Activated CD4-positive, alpha-beta memory T cell treated with anti-CD3 and anti-CD28 coated beads, Interleukin-2, amount 10 ng/mL, durations not matched to agents 7 days and 5 days (primary cell): ENCODE measurements at regions of chr2 and their contacts with region 1.

Region 1: DNA sequence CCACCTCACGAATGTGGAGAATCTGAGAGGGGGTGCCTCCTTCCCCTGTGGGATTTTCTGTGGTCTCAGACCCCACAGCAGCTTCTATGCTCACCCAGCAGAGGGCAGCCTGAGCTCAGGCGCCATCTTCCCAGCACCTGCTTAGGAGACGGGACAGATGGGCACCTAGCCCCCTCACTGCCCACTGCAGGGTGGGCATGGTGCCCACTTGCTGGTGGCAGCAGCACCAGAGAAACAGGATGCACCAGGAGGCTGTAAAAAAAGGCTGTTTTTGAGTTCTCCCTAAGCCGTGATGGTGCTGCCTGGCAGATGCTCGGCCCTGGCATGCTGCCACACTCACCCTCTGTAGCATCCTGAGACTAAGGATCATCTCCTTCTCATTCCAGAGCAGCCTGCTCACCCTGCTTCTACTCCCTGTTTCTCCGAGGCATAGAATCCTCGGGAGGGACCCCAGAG is 19.1 kb upstream of the SLC20A1 start:
- DNase-seq: peak; percentile 75
- H3K4me3 Mint-ChIP-seq: peak overlapping the region; percentile 49
- H3K27ac Mint-ChIP-seq: peak overlapping the region; percentile 93
- H3K4me1 Mint-ChIP-seq: peaks cover 86% of the 10 kb centered on the region
- H3K27me3 Mint-ChIP-seq: no peaks in the 10 kb centered on the region

Region 2: GRCh38 chr2:112584134-112584890 is 42.3 kb before region 1 on chr2 and contains the start of gene CHCHD5:
- CTCF ChIA-PET with region 1: interaction called, 7 read pairs
- POLR2A ChIA-PET with region 1: interaction called, 21 read pairs
- DNase-seq: peak; percentile 97
- H3K4me3 Mint-ChIP-seq: peak within 1 kb of the TSS; percentile 97
- H3K27ac Mint-ChIP-seq: peak within 1 kb of the TSS; percentile 95
- H3K4me1 Mint-ChIP-seq: peaks cover 47% of the 10 kb centered on the region
- H3K27me3 Mint-ChIP-seq: no peaks in the 10 kb centered on the region
- total RNA-seq, gene CHCHD5: 40.0 to 47.5 TPM

Region 3: DNA sequence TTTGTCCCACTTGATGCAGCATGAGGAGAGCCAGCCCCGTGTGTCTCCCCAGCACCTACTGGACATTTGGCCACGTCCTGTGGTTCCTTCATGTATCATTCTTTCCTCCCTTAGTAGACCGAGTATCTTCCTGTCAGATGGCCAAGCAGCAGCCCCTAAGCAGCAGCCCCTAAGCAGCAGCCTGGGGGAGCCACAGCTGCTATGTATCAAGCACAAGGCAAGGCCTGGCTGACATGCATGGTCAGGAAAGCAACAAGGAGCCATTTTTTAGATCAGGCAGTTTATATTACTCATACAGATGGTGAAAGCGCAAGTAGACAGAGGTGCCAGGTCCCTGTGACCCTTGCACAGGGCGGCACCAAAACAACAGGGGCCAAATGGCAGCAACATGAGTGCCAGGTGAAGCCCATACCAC is 20.1 kb before region 1 on chr2:
- CTCF ChIA-PET with region 1: interaction called, 65 read pairs
- POLR2A ChIA-PET with region 1: interaction called, 5 read pairs
- DNase-seq: no peak
- H3K4me3 Mint-ChIP-seq: no peak overlapping the region
- H3K27ac Mint-ChIP-seq: no peak overlapping the region
- H3K4me1 Mint-ChIP-seq: peaks cover 7% of the 10 kb centered on the region
- H3K27me3 Mint-ChIP-seq: peaks cover 17% of the 10 kb centered on the region

Region 4: GRCh38 chr2:112658820-112659667 is 32.4 kb after region 1 on chr2:
- CTCF ChIA-PET with region 1: interaction called, 15 read pairs
- POLR2A ChIA-PET with region 1: interaction called, 22 read pairs
- DNase-seq: no peak
- H3K4me3 Mint-ChIP-seq: no peak overlapping the region
- H3K27ac Mint-ChIP-seq: peak overlapping the region; percentile 71
- H3K4me1 Mint-ChIP-seq: peaks cover 77% of the 10 kb centered on the region
- H3K27me3 Mint-ChIP-seq: no peaks in the 10 kb centered on the region

Region 5: DNA sequence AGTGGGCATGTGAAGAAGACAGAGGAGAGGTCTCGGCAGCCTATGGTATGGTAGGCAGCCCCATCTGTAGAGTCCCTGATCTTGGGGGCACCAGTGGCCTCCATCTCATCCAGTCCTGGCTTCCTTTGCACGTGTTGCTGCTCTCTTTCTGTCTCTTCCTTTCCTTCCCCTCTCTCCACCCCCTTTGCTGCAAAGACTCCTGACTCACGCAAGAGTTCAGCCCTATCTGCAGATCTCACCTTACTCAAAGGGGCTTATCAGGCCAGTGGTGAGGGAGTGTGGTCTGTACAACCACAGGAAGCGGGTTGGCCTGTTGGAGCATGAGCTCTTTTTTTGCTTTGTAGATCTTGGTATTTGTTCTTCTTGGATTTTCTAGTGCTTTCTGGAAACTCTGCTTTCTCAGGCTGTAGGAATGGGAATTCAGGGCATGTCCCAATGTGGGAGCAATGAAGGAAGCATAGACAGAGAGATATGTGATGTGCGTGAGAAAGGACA is 79.6 kb after region 1 on chr2:
- CTCF ChIA-PET with region 1: interaction called, 35 read pairs
- POLR2A ChIA-PET with region 1: interaction called, 22 read pairs
- DNase-seq: peak; percentile 93
- H3K4me3 Mint-ChIP-seq: peak overlapping the region; percentile 55
- H3K27ac Mint-ChIP-seq: peak overlapping the region; percentile 82
- H3K4me1 Mint-ChIP-seq: peaks cover 64% of the 10 kb centered on the region
- H3K27me3 Mint-ChIP-seq: peaks cover 3% of the 10 kb centered on the region

Region 6: GRCh38 chr2:112784199-112785189 is 157.9 kb after region 1 on chr2 and contains the start of gene IL1A:
- CTCF ChIA-PET with region 1: no interaction called
- POLR2A ChIA-PET with region 1: no interaction called
- DNase-seq: no peak
- H3K4me3 Mint-ChIP-seq: peak within 1 kb of the TSS; percentile 48
- H3K27ac Mint-ChIP-seq: peak within 1 kb of the TSS; percentile 40
- H3K4me1 Mint-ChIP-seq: peaks cover 55% of the 10 kb centered on the region
- H3K27me3 Mint-ChIP-seq: no peaks in the 10 kb centered on the region
- total RNA-seq, gene IL1A: 4.8 to 5.4 TPM